AG04449 (cell line): ENCODE measurements at regions of chr19 and their contacts with region 1.

Region 1: GRCh38 chr19:2070436-2070827 is 19.4 kb upstream of the MKNK2 start:
- DNase-seq: no peak
- H3K4me3 ChIP-seq: no peak overlapping the region
- CTCF ChIP-seq: no peak

Region 2: GRCh38 chr19:2083174-2083854 is 12.9 kb after region 1 on chr19:
- CTCF ChIA-PET with region 1: interaction called, 26 read pairs
- POLR2A ChIA-PET with region 1: no interaction called
- DNase-seq: no peak
- H3K4me3 ChIP-seq: no peak overlapping the region
- CTCF ChIP-seq: no peak